ENCODE measurements at regions of chr1 and their contacts with region 1.

Region 1: DNA sequence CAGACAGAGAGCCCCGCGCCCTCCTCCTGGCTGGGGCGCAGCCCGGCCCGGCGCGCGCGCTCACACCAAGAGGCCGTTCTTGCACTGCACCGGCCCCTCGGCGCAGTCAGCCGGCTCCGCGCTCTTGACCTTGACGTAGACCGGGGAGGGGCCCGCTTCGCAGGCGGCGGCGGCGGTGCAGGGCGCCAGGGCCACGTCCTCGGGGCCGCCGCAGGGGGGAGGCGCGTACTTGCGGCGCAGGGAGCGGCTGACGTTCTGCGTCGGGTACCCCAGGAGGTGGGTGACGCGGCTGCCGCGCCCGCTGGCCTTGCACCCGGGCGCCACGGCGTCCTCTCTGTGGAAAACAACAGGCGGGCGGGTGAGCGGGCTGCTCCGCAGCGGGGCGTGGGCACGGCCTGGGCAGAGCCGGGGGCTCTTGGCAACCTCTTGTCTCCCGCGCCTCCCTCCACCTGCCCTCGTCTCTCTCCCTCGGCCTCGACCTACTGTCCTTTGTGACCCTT is 7.7 kb downstream of the VSIG8 start:
- DNase-seq: peak; percentile 92 to 97 (median 96)
- ATAC-seq: peak; percentile 97 to 98
- H3K4me3 ChIP-seq: peak overlapping the region; percentile 76
- H3K27ac ChIP-seq: peak overlapping the region; percentile 95
- H3K4me1 ChIP-seq: no peaks in the 10 kb centered on the region
- H3K27me3 ChIP-seq: no peaks in the 10 kb centered on the region

Region 2: GRCh38 chr1:159229486-159229885 is 625.3 kb before region 1 on chr1:
- intact Hi-C with region 1: no loop called
- DNase-seq: no peak
- ATAC-seq: no peak
- H3K4me3 ChIP-seq: no peak overlapping the region
- H3K27ac ChIP-seq: no peak overlapping the region
- H3K4me1 ChIP-seq: no peaks in the 10 kb centered on the region
- H3K27me3 ChIP-seq: no peaks in the 10 kb centered on the region

Region 3: DNA sequence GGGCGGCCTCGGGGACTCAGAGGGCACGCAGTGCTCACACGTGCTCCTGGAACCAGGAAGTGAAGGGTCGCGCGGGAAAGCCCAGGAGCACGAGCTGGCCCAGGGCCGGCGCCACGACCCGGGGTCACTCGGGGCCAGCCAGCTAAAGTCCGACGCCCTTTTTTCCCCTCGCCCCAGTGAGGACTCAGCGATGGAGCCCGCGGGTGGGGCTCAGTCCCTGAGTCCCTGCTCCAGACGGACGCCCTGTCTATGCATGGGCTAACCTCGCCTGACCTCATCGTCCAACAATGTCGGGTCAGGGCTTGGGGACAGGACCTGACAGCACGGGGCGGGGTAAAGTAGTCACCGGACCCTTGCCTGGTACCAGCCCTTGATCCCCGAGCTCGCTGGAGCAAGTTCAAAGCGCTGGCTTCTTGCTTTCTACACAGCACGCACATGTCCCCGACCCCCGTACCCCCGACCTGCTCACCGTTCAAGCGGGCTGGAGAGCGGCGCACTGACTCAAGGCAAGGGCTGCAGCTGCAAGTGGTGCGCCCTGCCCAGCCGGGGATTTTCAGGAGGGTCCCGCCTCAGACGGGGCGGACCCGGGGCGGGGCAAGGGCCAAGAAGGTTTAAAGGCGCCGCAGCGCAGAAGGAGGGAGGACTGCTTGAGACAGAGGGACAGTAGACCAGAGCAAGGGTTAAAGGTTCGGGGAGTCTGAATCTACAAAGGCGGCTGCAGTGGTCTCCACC is 70.4 kb after region 1 on chr1 and contains the start of gene TAGLN2:
- intact Hi-C with region 1: loop called in 1 of 4 experiments (anchors 10 kb)
- DNase-seq: peak; percentile 95 to 98 (median 97)
- ATAC-seq: peak; percentile 79 to 85
- H3K4me3 ChIP-seq: peak within 1 kb of the TSS; percentile 52
- H3K27ac ChIP-seq: peak within 1 kb of the TSS; percentile 94
- H3K4me1 ChIP-seq: peaks cover 14% of the 10 kb centered on the region
- H3K27me3 ChIP-seq: no peaks in the 10 kb centered on the region
- total RNA-seq, gene TAGLN2: 117 to 253 (median 162) TPM